ENCODE measurements at regions of chr11 and their contacts with region 1.

Region 1: DNA sequence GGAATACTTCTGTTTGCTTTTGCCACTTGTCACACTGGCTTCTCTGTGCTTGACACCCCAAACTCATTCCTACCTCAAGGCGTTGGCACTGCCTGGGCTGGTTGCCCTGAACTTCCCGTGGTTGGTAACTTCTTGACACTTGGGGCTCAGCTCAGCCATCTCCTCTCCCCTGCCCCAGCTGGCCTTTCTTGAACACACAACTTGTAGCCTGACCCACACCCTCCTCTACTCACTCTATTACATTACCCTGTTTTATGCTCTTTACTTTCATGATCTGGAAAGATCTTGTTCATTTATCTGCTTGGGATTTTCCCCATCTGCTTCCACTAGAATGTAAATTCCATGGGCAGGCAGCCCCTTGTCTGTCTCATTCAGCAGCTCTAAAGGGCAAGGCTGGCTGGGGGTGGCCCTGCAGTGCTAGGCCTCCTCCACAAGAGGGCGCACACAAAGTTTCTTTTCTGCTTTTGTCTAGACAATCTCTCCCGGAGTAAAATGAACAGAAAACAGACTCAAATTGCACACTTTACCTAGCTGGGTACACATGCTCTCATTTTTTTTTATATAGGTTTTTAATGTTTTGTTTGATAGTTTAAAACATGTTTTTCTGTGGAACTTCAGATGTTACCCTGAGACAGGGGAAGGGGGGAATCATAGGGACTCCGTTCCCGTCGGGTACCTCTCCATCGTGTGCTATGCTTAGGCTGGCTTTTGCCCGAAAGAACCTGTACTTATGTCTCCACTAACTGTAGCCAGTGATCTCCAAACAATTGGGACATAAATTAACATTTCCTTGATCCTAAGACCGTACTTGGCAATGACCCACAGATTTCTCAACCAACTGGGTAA is 16.4 kb upstream of the MRGPRX2 start:
- DNase-seq: peak; percentile 41
- H3K4me3 Mint-ChIP-seq: no peak overlapping the region
- H3K27ac Mint-ChIP-seq: no peak overlapping the region
- H3K4me1 Mint-ChIP-seq: peaks cover 1% of the 10 kb centered on the region
- H3K27me3 Mint-ChIP-seq: peaks cover 13% of the 10 kb centered on the region

Region 2: GRCh38 chr11:19116971-19117750 is 40.2 kb after region 1 on chr11 and contains the start of gene ZDHHC13:
- intact Hi-C with region 1: loop called (anchors 5 kb)
- DNase-seq: peak; percentile 94
- H3K4me3 Mint-ChIP-seq: peak within 1 kb of the TSS; percentile 93
- H3K27ac Mint-ChIP-seq: peak within 1 kb of the TSS; percentile 88
- H3K4me1 Mint-ChIP-seq: peaks cover 48% of the 10 kb centered on the region
- H3K27me3 Mint-ChIP-seq: peaks cover 11% of the 10 kb centered on the region
- total RNA-seq, gene ZDHHC13: 25.4 and 27.8 TPM in 2 replicates

Region 3: DNA sequence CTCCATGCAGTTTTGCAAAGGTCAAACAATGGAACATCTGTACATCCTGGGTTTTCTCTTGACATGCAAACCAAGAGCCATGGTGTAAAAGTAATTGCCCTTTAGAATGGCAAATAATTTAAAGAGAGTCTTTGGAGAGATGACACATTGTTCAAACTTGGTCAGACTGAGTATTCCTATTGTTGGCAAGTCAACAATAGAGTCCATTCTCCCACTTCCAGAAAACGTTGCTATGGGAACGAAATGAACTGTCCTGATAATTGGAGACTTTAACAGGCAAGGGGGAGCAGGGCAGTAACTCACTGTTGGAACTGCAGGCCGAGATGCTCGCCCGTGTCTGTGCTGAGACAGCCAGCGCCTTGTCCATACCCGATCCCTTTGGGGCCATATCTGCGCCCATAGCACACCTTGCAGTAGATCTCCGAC is 110.9 kb after region 1 on chr11:
- intact Hi-C with region 1: no loop called
- DNase-seq: no peak
- H3K4me3 Mint-ChIP-seq: no peak overlapping the region
- H3K27ac Mint-ChIP-seq: no peak overlapping the region
- H3K4me1 Mint-ChIP-seq: no peaks in the 10 kb centered on the region
- H3K27me3 Mint-ChIP-seq: no peaks in the 10 kb centered on the region